B cell (primary cell): ENCODE measurements at regions of chr14 and their contacts with region 1.

Region 1: DNA sequence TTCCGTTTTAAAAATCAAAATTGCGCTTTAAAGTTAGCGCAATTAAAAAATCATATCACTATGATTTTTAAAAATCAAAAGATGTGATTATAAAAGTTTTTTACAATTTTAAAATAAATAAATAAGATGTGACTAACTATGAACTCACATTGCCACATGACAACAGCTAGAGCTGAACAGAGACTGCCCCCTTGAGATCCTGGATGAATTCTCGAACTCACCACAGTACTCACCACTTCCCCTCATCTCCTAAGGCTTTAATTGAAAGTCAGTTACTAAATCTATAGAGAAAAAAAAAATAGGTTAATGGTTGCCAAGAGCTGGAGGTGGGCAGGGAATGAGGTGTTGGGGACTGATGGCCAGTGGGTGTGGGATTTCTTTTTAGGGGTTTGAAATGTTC is 384.2 kb downstream of the ZFP36L1 start:
- DNase-seq: peak; percentile 62
- ATAC-seq: peak; percentile 46
- H3K4me3 ChIP-seq: no peak overlapping the region
- H3K4me3 Mint-ChIP-seq: no peak overlapping the region
- H3K27ac ChIP-seq: peak overlapping the region; percentile 30 to 60
- H3K27ac Mint-ChIP-seq: peak overlapping the region; percentile 84
- H3K4me1 ChIP-seq: peaks cover 57 to 60% of the 10 kb centered on the region in 2 donors
- H3K4me1 Mint-ChIP-seq: peaks cover 61% of the 10 kb centered on the region
- H3K27me3 ChIP-seq: no peaks in the 10 kb centered on the region
- H3K27me3 Mint-ChIP-seq: no peaks in the 10 kb centered on the region
- CTCF ChIP-seq: peak; percentile 24

Region 2: DNA sequence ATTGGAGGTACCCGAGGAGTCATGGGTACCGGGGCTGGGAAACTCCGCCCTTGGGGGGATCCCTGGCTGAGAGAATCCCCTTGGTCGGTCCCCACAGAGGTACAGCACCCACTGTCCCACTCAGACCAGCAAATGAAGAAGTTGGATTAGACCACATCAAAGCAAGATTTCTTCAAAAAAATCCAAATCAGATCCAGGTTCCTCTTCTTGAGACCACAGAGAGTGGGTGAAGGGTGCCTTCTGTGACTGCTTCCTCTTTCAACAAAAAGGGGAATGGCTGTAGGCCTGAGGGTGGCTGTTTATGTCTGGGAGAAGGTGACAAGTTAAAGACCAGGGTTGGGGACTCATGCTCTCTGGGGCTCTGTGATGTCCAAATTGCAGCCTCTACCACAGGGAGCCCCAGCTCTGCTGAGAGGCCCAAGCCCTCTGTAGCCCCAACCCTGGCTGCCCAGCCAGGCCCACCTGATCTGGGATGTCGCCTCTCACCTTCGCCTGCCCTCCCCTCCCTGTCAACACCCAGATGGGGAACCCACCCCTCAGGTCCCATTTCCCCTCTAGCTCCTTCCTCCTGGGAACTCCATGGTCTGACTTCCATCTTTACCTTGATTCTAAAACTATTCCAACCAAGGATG is 333.3 kb after region 1 on chr14:
- CTCF ChIA-PET with region 1: no interaction called
- POLR2A ChIA-PET with region 1: no interaction called
- intact Hi-C with region 1: loop called (anchors 5 kb)
- DNase-seq: peak; percentile 92
- ATAC-seq: peak; percentile 92
- H3K4me3 ChIP-seq: no peak overlapping the region
- H3K4me3 Mint-ChIP-seq: peak overlapping the region; percentile 56
- H3K27ac ChIP-seq: peak overlapping the region; percentile 42 to 44
- H3K27ac Mint-ChIP-seq: peak overlapping the region; percentile 88
- H3K4me1 ChIP-seq: peaks cover 34 to 52% of the 10 kb centered on the region in 2 donors
- H3K4me1 Mint-ChIP-seq: peaks cover 55% of the 10 kb centered on the region
- H3K27me3 ChIP-seq: no peaks in the 10 kb centered on the region
- H3K27me3 Mint-ChIP-seq: no peaks in the 10 kb centered on the region
- CTCF ChIP-seq: no peak